ENCODE measurements at regions of chr1 and their contacts with region 1.

Region 1: DNA sequence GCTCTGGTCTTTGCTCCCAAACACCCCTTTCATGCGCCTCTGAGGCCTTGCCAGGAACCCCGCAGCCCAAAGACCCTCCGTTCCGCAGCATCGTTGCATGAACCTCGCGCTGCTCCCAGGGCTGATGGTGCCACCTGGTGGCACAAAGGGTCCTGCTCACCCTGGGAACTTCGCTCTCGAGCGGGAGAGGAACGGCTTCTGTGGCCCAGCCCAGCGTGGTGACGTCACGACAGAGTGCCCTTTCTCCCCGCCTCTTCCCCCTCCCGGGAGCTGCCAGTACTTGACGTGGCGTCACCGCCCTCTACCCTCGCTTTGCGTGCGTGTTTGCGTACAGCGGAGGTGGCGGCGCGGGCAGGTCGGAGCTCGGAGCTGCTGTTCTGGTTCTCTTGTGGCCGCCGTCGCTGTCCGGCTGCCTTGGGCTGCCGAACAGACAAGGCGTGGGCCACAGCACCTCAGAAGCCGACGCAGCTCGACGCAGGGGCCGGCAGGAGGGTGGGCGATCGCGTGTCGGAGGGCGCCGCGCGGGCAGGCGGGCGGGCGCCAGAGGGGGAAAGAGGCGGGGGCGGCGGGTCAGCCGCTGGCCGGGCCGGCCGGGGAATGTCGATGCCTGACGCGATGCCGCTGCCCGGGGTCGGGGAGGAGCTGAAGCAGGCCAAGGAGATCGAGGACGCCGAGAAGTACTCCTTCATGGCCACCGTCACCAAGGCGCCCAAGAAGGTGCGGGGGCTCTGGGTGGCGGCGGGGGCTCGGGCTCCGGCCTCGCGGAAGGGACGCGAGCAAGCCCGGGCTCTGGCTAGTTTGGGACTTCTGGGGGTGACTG is at the start of gene AHCYL1:
- DNase-seq: peak; percentile 100
- H3K4me3 Mint-ChIP-seq: peak within 1 kb of the TSS; percentile 90
- H3K27ac Mint-ChIP-seq: peak within 1 kb of the TSS; percentile 93
- H3K4me1 Mint-ChIP-seq: peaks cover 32% of the 10 kb centered on the region
- H3K27me3 Mint-ChIP-seq: peaks cover 19% of the 10 kb centered on the region

Region 2: GRCh38 chr1:109643385-109644230 is 341.1 kb before region 1 on chr1:
- CTCF ChIA-PET with region 1: interaction called, 131 read pairs
- DNase-seq: peak; percentile 92
- H3K4me3 Mint-ChIP-seq: no peak overlapping the region
- H3K27ac Mint-ChIP-seq: peak overlapping the region; percentile 5
- H3K4me1 Mint-ChIP-seq: peaks cover 13% of the 10 kb centered on the region
- H3K27me3 Mint-ChIP-seq: peaks cover 37% of the 10 kb centered on the region

Region 3: DNA sequence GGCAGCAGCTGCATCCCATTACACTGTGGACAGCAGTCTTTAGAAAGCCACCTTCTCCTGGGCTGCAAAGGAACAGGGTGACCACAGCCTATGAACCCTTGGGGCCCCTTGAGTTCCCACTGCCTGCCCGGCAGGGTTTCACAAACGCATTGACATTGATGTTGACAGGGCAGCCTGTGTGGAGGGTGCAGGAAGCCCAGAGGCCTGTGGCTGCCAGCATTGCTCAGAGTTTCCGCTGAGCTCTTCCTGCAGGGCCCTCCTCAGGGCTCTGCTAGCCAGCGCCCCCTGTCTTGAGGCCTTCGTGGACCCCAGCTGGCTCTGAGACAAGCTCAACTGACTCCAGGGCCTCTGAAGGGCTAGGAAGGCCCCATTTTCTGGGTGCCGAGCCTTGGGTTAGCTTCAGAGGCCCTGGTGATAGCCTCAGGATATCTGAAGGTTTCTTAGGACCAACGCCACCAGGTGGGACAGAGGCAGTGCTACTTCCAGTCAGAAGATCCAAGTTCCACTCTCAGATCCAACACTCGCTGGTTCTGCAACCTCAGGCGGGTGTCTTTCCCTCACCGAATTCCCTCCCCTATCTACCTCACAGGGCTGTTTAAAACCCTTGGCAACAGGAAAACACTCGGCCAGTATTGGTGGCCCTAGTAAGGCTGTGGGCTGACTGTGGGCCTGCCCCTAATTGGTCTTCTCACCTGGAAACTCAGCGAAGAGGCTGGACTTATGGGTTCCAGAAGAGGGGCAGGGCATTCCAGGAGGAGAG is 193.8 kb before region 1 on chr1:
- CTCF ChIA-PET with region 1: interaction called, 31 read pairs
- DNase-seq: peak; percentile 88
- H3K4me3 Mint-ChIP-seq: no peak overlapping the region
- H3K27ac Mint-ChIP-seq: peak overlapping the region; percentile 91
- H3K4me1 Mint-ChIP-seq: peaks cover 77% of the 10 kb centered on the region
- H3K27me3 Mint-ChIP-seq: peaks cover 3% of the 10 kb centered on the region

Region 4: GRCh38 chr1:109923131-109923945 is 61.3 kb before region 1 on chr1:
- CTCF ChIA-PET with region 1: interaction called, 11 read pairs
- DNase-seq: peak; percentile 32
- H3K4me3 Mint-ChIP-seq: no peak overlapping the region
- H3K27ac Mint-ChIP-seq: no peak overlapping the region
- H3K4me1 Mint-ChIP-seq: no peaks in the 10 kb centered on the region
- H3K27me3 Mint-ChIP-seq: no peaks in the 10 kb centered on the region

Region 5: GRCh38 chr1:109947582-109948286 is 36.9 kb before region 1 on chr1:
- CTCF ChIA-PET with region 1: no interaction called
- DNase-seq: no peak
- H3K4me3 Mint-ChIP-seq: no peak overlapping the region
- H3K27ac Mint-ChIP-seq: no peak overlapping the region
- H3K4me1 Mint-ChIP-seq: peaks cover 4% of the 10 kb centered on the region
- H3K27me3 Mint-ChIP-seq: peaks cover 12% of the 10 kb centered on the region

Region 6: GRCh38 chr1:110003747-110004630 is 19.3 kb after region 1 on chr1:
- CTCF ChIA-PET with region 1: interaction called, 56 read pairs
- DNase-seq: peak; percentile 34
- H3K4me3 Mint-ChIP-seq: no peak overlapping the region
- H3K27ac Mint-ChIP-seq: peak overlapping the region; percentile 19
- H3K4me1 Mint-ChIP-seq: peaks cover 19% of the 10 kb centered on the region
- H3K27me3 Mint-ChIP-seq: no peaks in the 10 kb centered on the region

Region 7: DNA sequence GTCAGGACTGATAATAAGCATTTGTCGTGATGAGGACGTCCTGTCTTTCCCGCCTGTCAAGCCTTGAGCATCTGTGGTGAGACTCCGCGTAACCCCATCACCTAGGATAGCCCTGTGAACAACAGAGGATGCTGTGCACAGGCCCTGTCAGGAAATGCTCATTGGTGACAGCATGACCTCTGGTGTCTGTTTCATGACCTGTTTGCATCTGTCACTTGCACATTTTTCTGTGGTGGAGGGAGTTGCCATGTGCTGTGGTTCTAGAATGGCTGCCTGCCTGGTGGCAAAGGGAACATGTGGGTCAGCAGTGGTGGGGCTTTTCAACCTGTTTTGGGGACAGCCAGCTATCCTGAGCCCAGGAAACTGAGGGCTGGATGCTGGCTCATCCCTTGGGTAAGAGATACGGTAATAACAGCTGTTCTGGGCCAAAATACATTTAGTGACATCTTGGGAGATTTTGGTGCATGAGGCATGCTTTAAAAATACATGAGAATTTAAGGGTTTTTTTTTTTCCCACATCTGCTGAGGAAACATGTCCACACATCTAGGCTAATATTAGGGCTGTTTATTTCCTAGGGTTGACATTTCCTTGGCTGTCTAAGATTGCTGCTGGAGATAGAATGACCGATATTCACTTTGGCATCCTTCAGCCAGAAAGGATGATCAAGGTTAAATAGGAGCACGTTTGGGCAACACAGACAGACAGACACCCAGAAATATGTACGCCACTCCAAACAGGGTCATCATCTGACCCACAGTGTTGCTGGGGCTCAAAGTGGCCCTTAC is 278.4 kb after region 1 on chr1:
- CTCF ChIA-PET with region 1: no interaction called
- DNase-seq: peak; percentile 30
- H3K4me3 Mint-ChIP-seq: no peak overlapping the region
- H3K27ac Mint-ChIP-seq: no peak overlapping the region
- H3K4me1 Mint-ChIP-seq: no peaks in the 10 kb centered on the region
- H3K27me3 Mint-ChIP-seq: peaks cover 23% of the 10 kb centered on the region